Testis (tissue), 5 donors: ENCODE measurements at regions of chr6 and their contacts with region 1.

Region 1: GRCh38 chr6:34757687-34758274 is 476 bp downstream of the SNRPC start:
- DNase-seq: no peak
- H3K4me3 ChIP-seq: peak overlapping the region; percentile 63 to 75
- H3K27ac ChIP-seq: peak overlapping the region; percentile 77 to 91
- H3K4me1 ChIP-seq: peaks cover 5% of the 10 kb centered on the region
- H3K27me3 ChIP-seq: no peaks in the 10 kb centered on the region
- CTCF ChIP-seq: no peak
- POLR2A ChIP-seq: no peak

Region 2: GRCh38 chr6:34531580-34532201 is 226.1 kb before region 1 on chr6:
- intact Hi-C with region 1: no loop called
- DNase-seq: peak; percentile 88
- H3K4me3 ChIP-seq: peak overlapping the region; percentile 3 to 40
- H3K27ac ChIP-seq: no peak overlapping the region
- H3K4me1 ChIP-seq: peaks cover under 1% of the 10 kb centered on the region
- H3K27me3 ChIP-seq: no peaks in the 10 kb centered on the region
- CTCF ChIP-seq: no peak
- POLR2A ChIP-seq: no peak

Region 3: DNA sequence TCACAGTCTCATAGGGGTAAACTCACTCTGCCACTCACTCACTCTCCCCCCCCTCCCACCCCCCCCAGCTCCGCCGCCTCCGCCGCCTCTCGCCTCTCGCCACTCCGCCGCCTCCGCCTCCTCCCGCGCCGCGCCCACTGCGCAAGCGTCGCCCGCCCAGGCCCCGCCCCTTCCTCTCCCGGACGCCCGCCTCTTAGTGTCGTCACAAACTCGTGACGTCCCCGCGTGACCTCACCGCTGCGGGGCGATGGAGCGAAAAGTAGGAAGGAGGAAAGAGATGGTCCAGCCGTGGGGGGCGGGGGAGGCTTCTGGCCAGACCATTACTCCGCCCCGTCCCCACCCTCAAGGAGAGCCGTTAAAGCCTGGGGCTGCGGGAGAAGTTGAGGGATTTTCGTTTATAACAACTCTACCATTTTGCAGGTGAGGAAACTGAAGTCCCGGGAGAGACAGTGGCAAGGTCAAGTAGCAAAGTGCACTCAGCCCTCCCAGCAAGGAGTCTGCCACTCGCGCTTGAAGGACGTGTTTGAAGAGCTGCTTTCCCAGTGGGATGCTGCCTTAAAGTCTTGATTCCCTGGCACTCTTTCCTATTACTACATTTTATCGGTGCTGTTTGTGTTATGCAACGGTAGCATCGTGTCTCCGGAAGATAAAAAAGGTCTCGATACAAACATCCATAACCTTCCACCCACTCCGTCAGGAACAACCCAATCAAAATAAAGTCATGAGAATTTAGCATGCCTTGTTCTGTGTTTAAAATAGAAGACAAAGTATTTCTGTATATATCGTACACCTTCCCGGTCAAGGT is 60.8 kb before region 1 on chr6 and contains the start of gene ILRUN:
- intact Hi-C with region 1: loop called (anchors 5 kb)
- DNase-seq: peak; percentile 98
- H3K4me3 ChIP-seq: peak within 1 kb of the TSS; percentile 93 to 99
- H3K27ac ChIP-seq: peak within 1 kb of the TSS; percentile 97
- H3K4me1 ChIP-seq: peaks cover 11% of the 10 kb centered on the region
- H3K27me3 ChIP-seq: no peaks in the 10 kb centered on the region
- CTCF ChIP-seq: no peak
- POLR2A ChIP-seq: peak; percentile 86
- total RNA-seq, gene ILRUN: 82.4 to 91.2 TPM

Region 4: GRCh38 chr6:34953061-34954025 is 195.6 kb after region 1 on chr6:
- intact Hi-C with region 1: no loop called
- DNase-seq: no peak
- H3K4me3 ChIP-seq: no peak overlapping the region
- H3K27ac ChIP-seq: peak overlapping the region; percentile 29 to 82
- H3K4me1 ChIP-seq: peaks cover 59% of the 10 kb centered on the region
- H3K27me3 ChIP-seq: no peaks in the 10 kb centered on the region
- CTCF ChIP-seq: no peak
- POLR2A ChIP-seq: no peak